MCF 10A (cell line): ENCODE measurements at regions of chr6 and their contacts with region 1.

Region 1: DNA sequence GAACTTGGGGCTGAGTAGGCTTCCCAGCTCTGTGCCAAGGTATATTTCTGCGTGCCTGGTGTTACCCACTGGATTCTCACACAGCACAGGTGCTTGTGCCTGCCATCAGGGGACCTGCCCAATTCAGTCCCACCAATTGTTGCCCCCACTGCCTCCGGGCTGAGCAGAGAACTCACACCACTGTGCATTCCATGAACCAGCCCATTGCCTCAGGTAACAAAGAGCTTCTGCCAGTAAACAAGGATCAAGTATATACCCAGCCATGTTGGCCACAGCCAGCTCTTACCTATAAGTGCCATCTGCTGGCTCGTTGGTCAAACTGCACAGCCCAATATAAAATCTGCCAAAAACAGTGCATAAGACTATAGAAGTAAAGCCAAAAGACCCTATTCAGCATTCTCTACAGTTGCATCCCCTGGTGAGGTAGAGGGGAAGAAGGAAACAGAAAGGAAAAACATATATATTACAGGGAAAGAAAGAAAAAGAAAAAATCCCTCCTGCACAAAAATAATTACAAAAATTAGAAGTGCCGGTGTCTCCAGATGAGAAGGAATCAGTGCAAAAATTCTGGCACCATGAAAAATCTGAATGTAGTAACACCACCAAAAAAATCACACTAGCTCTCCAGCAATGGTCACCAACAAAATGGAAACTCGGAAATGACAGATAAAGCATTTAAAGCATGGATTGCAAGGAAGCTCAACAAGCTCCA is 241.4 kb downstream of the IBTK start:
- DNase-seq: peak; percentile 51
- H3K4me3 Mint-ChIP-seq: no peak overlapping the region
- H3K27ac Mint-ChIP-seq: no peak overlapping the region
- H3K4me1 Mint-ChIP-seq: no peaks in the 10 kb centered on the region
- H3K27me3 Mint-ChIP-seq: no peaks in the 10 kb centered on the region
- CTCF ChIP-seq: peak; percentile 47

Region 2: GRCh38 chr6:81241126-81242041 is 764.8 kb before region 1 on chr6:
- CTCF ChIA-PET with region 1: no interaction called
- POLR2A ChIA-PET with region 1: no interaction called
- intact Hi-C with region 1: loop called (anchors 10 kb)
- DNase-seq: peak; percentile 45
- H3K4me3 Mint-ChIP-seq: no peak overlapping the region
- H3K27ac Mint-ChIP-seq: no peak overlapping the region
- H3K4me1 Mint-ChIP-seq: no peaks in the 10 kb centered on the region
- H3K27me3 Mint-ChIP-seq: no peaks in the 10 kb centered on the region
- CTCF ChIP-seq: peak; percentile 37

Region 3: GRCh38 chr6:81465859-81466258 is 540.3 kb before region 1 on chr6:
- CTCF ChIA-PET with region 1: no interaction called
- POLR2A ChIA-PET with region 1: no interaction called
- intact Hi-C with region 1: loop called (anchors 10 kb)
- DNase-seq: peak; percentile 49
- H3K4me3 Mint-ChIP-seq: no peak overlapping the region
- H3K27ac Mint-ChIP-seq: no peak overlapping the region
- H3K4me1 Mint-ChIP-seq: no peaks in the 10 kb centered on the region
- H3K27me3 Mint-ChIP-seq: no peaks in the 10 kb centered on the region
- CTCF ChIP-seq: peak; percentile 48

Region 4: DNA sequence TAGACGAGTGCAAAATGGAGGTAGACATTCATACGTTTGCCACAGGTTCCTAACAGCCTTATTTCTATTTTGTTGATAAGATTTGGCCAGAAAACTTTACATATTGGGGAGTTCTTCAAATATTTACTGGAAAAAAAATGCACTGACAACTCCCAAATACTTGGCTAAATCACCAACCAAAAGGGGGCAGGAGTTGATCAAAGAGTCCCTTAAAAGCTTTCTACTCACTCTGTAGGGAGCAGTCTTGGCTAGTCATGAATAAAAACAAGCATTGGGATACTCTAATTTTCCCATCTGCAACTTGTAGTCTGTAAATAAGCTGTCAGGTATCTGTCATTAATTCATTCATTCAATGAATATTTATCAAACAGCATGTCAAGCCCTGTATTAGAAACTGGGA is 272.1 kb before region 1 on chr6:
- CTCF ChIA-PET with region 1: interaction called, 13 read pairs
- POLR2A ChIA-PET with region 1: no interaction called
- intact Hi-C with region 1: no loop called
- DNase-seq: peak; percentile 26
- H3K4me3 Mint-ChIP-seq: no peak overlapping the region
- H3K27ac Mint-ChIP-seq: no peak overlapping the region
- H3K4me1 Mint-ChIP-seq: peaks cover 20% of the 10 kb centered on the region
- H3K27me3 Mint-ChIP-seq: no peaks in the 10 kb centered on the region
- CTCF ChIP-seq: no peak

Region 5: GRCh38 chr6:82017288-82017687 is 11.1 kb after region 1 on chr6:
- CTCF ChIA-PET with region 1: interaction called, 11 read pairs
- POLR2A ChIA-PET with region 1: interaction called, 6 read pairs
- intact Hi-C with region 1: no loop called
- DNase-seq: peak; percentile 98
- H3K4me3 Mint-ChIP-seq: peak overlapping the region; percentile 54
- H3K27ac Mint-ChIP-seq: peak overlapping the region; percentile 99
- H3K4me1 Mint-ChIP-seq: peaks cover 50% of the 10 kb centered on the region
- H3K27me3 Mint-ChIP-seq: no peaks in the 10 kb centered on the region
- CTCF ChIP-seq: no peak

Region 6: GRCh38 chr6:82303808-82304207 is 297.6 kb after region 1 on chr6:
- CTCF ChIA-PET with region 1: no interaction called
- POLR2A ChIA-PET with region 1: no interaction called
- intact Hi-C with region 1: no loop called
- DNase-seq: no peak
- H3K4me3 Mint-ChIP-seq: no peak overlapping the region
- H3K27ac Mint-ChIP-seq: no peak overlapping the region
- H3K4me1 Mint-ChIP-seq: peaks cover 5% of the 10 kb centered on the region
- H3K27me3 Mint-ChIP-seq: no peaks in the 10 kb centered on the region
- CTCF ChIP-seq: no peak